ENCODE measurements at regions of chr2 and their contacts with region 1.

Region 1: DNA sequence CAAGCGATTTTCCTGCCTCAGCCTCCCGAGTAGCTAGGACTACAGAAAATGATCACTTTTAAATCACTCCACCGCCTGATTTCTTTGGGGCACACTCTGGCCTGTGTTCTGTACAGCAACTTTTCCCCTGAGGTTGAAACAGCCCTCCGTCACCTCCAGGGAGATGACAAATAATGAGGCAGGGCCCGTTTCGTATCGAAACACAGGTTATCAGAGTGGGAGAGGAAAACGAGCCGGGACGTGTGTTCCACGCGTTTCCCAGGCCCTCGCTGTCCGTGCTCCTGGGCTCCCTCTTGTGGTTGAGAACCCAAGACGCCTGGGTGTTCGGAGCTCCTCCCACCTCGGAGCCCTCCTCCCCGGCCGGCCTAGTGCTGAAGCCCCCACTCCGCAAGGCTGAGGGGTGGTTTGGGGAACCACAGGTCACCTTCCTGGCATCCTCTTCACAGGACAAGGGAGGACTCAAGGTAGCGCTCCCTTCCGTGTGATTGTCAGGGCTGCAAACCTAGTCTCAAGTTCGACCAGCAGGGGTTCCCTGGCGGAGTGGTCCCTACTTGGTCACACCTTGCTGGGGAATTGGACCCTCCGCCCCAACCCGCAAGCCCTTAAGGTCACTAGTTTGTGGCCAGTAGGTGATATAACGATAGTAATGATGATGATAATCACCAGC is 12.8 kb downstream of the ATP6V1B1 start:
- DNase-seq: peak; percentile 77 to 79
- ATAC-seq: peak; percentile 94 to 98
- H3K4me3 ChIP-seq: peak overlapping the region; percentile 4
- H3K27ac ChIP-seq: peak overlapping the region; percentile 12 to 76; a peak in 5 of 6 replicates
- H3K4me1 ChIP-seq: peaks cover 13% of the 10 kb centered on the region; the same call in 2 of the 3 replicates
- CTCF ChIP-seq: peak; percentile 86
- EP300 ChIP-seq: no peak
- POLR2A ChIP-seq: peak; percentile 4; the same call in 1 of the 2 replicates
- RAD21 ChIP-seq: peak; percentile 56 to 57

Region 2: DNA sequence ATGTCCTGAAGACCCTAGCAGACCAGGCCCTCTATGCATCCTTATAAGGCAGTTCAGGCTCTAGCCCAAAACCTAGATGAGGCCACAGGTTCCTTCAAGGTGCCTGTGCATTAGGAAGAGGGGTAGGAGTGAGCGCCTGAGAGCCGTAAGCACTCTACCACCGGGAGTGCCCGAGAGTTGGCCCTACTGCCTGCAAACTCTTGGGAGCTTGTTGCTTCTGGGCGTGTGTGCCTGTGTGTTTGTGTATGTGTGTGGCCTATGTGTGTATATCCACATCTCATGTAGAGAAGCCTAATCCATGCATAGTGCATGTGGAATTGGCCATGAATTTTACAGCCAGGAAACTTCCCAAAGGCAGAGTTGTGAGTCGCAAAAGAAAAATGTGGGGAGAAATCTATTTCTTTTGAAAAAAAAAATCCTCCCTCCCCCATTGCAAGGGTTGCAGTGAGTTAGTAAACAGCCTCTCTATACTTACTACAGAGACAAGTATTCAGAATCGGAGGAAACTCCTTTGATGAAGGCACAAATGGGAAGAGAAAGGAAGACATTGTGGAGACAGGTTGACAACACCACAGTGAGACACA is 277.3 kb before region 1 on chr2:
- CTCF ChIA-PET with region 1: interaction called, 13 read pairs
- POLR2A ChIA-PET with region 1: no interaction called
- DNase-seq: no peak
- ATAC-seq: peak in 1 of 2 experiments; percentile 52; a peak in 3 of 6 replicates
- H3K4me3 ChIP-seq: no peak overlapping the region
- H3K27ac ChIP-seq: no peak overlapping the region
- H3K4me1 ChIP-seq: 0 out of 3 replicates have a peak, but pooled peaks cover 5% of the 10 kb centered on the region
- CTCF ChIP-seq: no peak
- EP300 ChIP-seq: no peak
- POLR2A ChIP-seq: no peak
- RAD21 ChIP-seq: no peak

Region 3: GRCh38 chr2:70828914-70829824 is 119.3 kb before region 1 on chr2:
- CTCF ChIA-PET with region 1: interaction called, 10 read pairs
- POLR2A ChIA-PET with region 1: no interaction called
- DNase-seq: no peak
- ATAC-seq: no peak
- H3K4me3 ChIP-seq: no peak overlapping the region
- H3K27ac ChIP-seq: no peak overlapping the region
- H3K4me1 ChIP-seq: no peaks in the 10 kb centered on the region
- CTCF ChIP-seq: no peak
- EP300 ChIP-seq: no peak
- POLR2A ChIP-seq: no peak
- RAD21 ChIP-seq: no peak

Region 4: GRCh38 chr2:70871398-70872211 is 76.9 kb before region 1 on chr2:
- CTCF ChIA-PET with region 1: interaction called, 486 read pairs
- POLR2A ChIA-PET with region 1: interaction called, 4 read pairs
- DNase-seq: peak; percentile 84 to 88
- ATAC-seq: peak; percentile 97 to 99
- H3K4me3 ChIP-seq: peak overlapping the region; percentile 32
- H3K27ac ChIP-seq: no peak overlapping the region
- H3K4me1 ChIP-seq: peaks cover 5% of the 10 kb centered on the region; the same call in 2 of the 3 replicates
- CTCF ChIP-seq: peak; percentile 98
- EP300 ChIP-seq: no peak
- POLR2A ChIP-seq: no peak
- RAD21 ChIP-seq: peak; percentile 97 to 98

Region 5: DNA sequence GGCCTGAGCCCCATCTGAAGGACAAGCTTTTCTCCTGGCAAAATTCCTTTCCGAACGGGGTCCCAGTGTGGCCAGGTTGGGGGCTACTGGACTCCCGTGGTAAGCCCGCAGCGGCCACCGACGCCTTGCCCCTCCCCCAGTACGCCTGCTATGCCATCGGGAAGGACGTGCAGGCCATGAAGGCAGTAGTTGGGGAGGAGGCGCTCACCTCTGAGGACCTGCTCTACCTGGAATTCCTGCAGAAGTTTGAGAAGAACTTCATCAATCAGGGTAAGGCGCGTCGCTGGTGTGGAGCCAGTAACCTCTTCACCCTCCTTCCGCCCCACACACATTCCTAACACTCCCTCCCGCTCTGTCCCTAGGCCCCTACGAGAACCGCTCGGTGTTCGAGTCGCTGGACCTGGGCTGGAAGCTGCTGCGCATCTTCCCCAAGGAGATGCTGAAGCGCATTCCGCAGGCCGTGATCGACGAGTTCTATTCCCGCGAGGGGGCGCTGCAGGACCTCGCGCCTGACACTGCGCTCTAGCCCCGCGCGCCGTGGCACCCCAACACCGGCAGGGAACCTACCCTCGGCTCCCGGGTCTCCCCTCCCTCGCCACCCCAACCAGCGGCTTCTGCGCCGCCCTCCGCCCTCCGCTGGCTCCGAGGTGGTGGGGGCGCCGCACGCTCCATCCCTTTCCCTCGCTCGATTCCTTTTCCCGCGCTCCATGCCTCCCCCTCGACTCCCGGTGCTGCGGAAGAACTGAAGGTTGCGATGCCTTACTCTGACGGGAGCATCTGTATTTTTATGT is 16.3 kb after region 1 on chr2:
- CTCF ChIA-PET with region 1: interaction called, 120 read pairs
- POLR2A ChIA-PET with region 1: no interaction called
- DNase-seq: peak; percentile 77 to 80
- ATAC-seq: peak; percentile 69 to 94
- H3K4me3 ChIP-seq: peak overlapping the region; percentile 51
- H3K27ac ChIP-seq: peak overlapping the region in 1 of 2 experiments; percentile 71; a peak in 3 of 6 replicates
- H3K4me1 ChIP-seq: no peaks in the 10 kb centered on the region
- CTCF ChIP-seq: peak; percentile 93
- EP300 ChIP-seq: no peak
- POLR2A ChIP-seq: no peak
- RAD21 ChIP-seq: peak; percentile 62 to 69

Region 6: DNA sequence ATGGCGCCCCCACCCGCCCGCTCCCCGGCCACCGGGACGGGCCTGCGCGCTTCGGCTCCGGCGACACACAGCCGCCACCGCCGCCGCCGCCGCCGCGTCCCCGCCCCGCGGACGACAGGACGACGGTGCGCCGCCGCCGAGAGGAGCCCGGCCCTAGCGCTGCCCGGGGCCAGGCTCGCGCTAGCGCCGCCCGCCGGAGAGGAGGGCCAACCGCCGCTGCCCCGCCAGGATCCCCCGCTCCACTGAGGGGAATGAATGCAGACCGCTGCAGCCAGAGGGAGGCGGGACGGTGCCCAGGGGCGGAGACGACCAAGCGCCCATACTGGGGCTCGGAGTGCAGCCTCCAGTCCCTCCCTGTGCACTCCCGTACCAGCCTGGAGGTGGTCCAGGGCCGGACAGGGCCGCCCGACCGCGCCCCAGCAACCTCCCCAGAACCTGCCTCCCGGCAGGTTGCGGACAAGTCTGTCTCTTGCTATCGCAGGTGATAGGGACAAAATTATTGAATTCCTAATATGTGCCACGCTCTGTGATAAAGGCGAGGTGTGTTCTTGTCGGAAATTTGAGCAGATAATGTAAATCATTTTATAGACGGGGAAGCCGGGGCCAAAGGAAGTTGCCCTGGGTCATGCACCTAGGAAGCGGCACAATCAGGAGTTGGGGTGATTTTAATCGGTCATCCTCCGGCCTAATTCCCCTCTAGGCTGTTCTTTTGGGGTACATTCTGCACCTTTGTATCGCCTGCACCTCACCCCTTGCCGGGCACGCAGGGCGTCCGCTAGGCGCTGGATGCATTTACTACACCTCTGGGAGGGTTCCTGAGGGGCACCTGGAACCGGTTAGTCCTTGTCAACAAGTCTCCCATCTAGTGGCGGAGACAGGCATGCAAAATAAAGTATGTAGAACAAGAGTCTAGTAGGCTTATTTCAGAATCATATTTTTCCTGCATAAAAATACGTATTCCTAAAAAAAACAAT is 46.6 kb after region 1 on chr2 and contains the start of gene TEX261:
- CTCF ChIA-PET with region 1: interaction called, 11 read pairs
- POLR2A ChIA-PET with region 1: no interaction called
- DNase-seq: peak; percentile 92 to 93
- ATAC-seq: peak; percentile 96 to 99
- H3K4me3 ChIP-seq: peak within 1 kb of the TSS; percentile 83
- H3K27ac ChIP-seq: peak within 1 kb of the TSS; percentile 81 to 96
- H3K4me1 ChIP-seq: peaks cover 17% of the 10 kb centered on the region; the same call in 2 of the 3 replicates
- CTCF ChIP-seq: peak; percentile 89
- EP300 ChIP-seq: no peak
- POLR2A ChIP-seq: peak; percentile 53
- RAD21 ChIP-seq: 0 out of 5 replicates have a peak, but pooled peaks of 1 of the 2 experiments have one; percentile 12
- polyA plus RNA-seq, gene TEX261: 87.1 and 109 TPM in 2 replicates

Region 7: DNA sequence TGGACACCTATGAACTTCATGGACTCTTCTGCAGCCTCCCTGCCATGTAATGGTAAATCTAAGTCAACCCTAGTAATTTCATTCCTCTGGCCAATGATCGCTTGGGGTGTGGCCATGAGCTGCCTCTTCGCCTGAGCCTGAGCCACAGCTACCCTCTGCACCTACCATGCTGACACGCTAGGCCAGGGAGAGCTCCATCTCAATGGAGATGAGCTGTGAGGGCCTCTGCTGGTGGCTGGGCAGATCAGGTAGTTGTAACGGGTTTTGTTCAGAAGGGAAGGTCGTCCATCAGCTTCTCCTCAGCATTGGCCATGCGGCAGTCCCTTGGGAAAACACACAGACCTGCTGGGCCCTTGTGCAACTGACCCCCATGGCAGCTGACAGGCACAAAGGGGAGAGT is 206.3 kb after region 1 on chr2:
- CTCF ChIA-PET with region 1: no interaction called
- POLR2A ChIA-PET with region 1: no interaction called
- DNase-seq: peak; percentile 32 to 73
- ATAC-seq: peak; percentile 70 to 83
- H3K4me3 ChIP-seq: no peak overlapping the region
- H3K27ac ChIP-seq: no peak overlapping the region
- H3K4me1 ChIP-seq: peaks cover 7% of the 10 kb centered on the region; the same call in 2 of the 3 replicates
- CTCF ChIP-seq: no peak
- EP300 ChIP-seq: no peak
- POLR2A ChIP-seq: no peak
- RAD21 ChIP-seq: 0 out of 5 replicates have a peak, but pooled peaks of 1 of the 2 experiments have one; percentile 23

Measured in A549 (cell line).